ENCODE measurements at regions of chr15 and their contacts with region 1.

Region 1: DNA sequence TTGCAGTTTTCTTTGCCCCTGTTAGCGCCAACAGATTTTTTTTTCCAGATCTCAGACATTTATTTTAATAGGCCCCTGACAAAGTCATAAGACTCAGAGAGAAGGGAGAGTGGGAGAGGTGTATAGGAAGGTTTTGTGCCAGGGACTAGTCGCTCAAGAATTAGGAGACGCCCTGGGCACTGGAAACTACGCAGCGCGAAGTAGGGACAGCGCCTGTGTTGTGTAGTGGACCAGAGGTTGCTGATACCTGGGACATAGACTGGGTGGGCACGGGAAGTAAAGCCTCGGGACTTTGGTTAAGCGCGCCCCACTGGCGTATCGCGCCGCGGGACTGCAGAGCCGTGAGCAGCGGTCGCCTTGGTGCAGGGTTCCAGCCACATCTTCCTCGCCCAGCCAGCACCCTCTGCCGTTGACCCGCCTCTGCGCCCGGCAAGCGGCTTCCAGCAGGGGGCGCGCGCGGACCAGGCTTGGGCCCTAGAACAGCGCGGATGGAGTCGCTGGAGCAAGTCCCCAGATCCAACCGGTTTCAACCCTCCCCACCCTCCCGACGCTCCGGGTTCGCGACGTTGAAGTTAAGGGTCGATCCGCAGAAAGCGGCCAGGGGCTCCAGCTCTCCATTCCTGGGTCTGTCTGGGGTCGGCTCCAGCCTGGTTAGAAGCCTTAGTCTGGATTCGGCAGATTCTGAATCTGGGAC is 3.0 kb upstream of the ISLR2 start:
- DNase-seq: peak; percentile 72 to 94 (median 82)
- ATAC-seq: peak; percentile 90
- H3K4me3 ChIP-seq: no peak overlapping the region
- H3K4me3 Mint-ChIP-seq: no peak overlapping the region
- H3K27ac ChIP-seq: no peak overlapping the region
- H3K27ac Mint-ChIP-seq: no peak overlapping the region
- H3K4me1 ChIP-seq: peaks cover 25% of the 10 kb centered on the region
- H3K4me1 Mint-ChIP-seq: peaks cover 26% of the 10 kb centered on the region
- H3K27me3 ChIP-seq: peaks cover 27 to 39% of the 10 kb centered on the region in 2 experiments
- H3K27me3 Mint-ChIP-seq: peaks cover 61% of the 10 kb centered on the region
- CTCF ChIP-seq: peak; percentile 87

Region 2: GRCh38 chr15:74053941-74054529 is 73.4 kb before region 1 on chr15:
- CTCF ChIA-PET with region 1: no interaction called
- POLR2A ChIA-PET with region 1: no interaction called
- intact Hi-C with region 1: loop called in 1 of 2 experiments (anchors 10 kb)
- DNase-seq: peak; percentile 26 to 80 (median 70)
- ATAC-seq: peak; percentile 100
- H3K4me3 ChIP-seq: no peak overlapping the region
- H3K4me3 Mint-ChIP-seq: no peak overlapping the region
- H3K27ac ChIP-seq: no peak overlapping the region
- H3K27ac Mint-ChIP-seq: no peak overlapping the region
- H3K4me1 ChIP-seq: peaks cover 7% of the 10 kb centered on the region
- H3K4me1 Mint-ChIP-seq: peaks cover 21% of the 10 kb centered on the region
- H3K27me3 ChIP-seq: no peaks in the 10 kb centered on the region
- H3K27me3 Mint-ChIP-seq: no peaks in the 10 kb centered on the region
- CTCF ChIP-seq: no peak

Region 3: GRCh38 chr15:74156678-74157411 is 29.4 kb after region 1 on chr15:
- CTCF ChIA-PET with region 1: no interaction called
- POLR2A ChIA-PET with region 1: no interaction called
- intact Hi-C with region 1: no loop called
- DNase-seq: peak in 1 of 9 experiments; percentile 23
- ATAC-seq: no peak
- H3K4me3 ChIP-seq: no peak overlapping the region
- H3K4me3 Mint-ChIP-seq: no peak overlapping the region
- H3K27ac ChIP-seq: no peak overlapping the region
- H3K27ac Mint-ChIP-seq: no peak overlapping the region
- H3K4me1 ChIP-seq: peaks cover 3% of the 10 kb centered on the region
- H3K4me1 Mint-ChIP-seq: peaks cover 14% of the 10 kb centered on the region
- H3K27me3 ChIP-seq: peaks cover 0 to 3% of the 10 kb centered on the region in 2 experiments
- H3K27me3 Mint-ChIP-seq: peaks cover 11% of the 10 kb centered on the region
- CTCF ChIP-seq: no peak

Region 4: GRCh38 chr15:74307827-74308644 is 180.6 kb after region 1 on chr15:
- CTCF ChIA-PET with region 1: interaction called, 10 read pairs
- POLR2A ChIA-PET with region 1: no interaction called
- intact Hi-C with region 1: no loop called
- DNase-seq: peak in 5 of 9 experiments; percentile 17 to 61 (median 39)
- ATAC-seq: no peak
- H3K4me3 ChIP-seq: no peak overlapping the region
- H3K4me3 Mint-ChIP-seq: no peak overlapping the region
- H3K27ac ChIP-seq: no peak overlapping the region
- H3K27ac Mint-ChIP-seq: no peak overlapping the region
- H3K4me1 ChIP-seq: peaks cover 10% of the 10 kb centered on the region
- H3K4me1 Mint-ChIP-seq: peaks cover 3% of the 10 kb centered on the region
- H3K27me3 ChIP-seq: no peaks in the 10 kb centered on the region
- H3K27me3 Mint-ChIP-seq: peaks cover 29% of the 10 kb centered on the region
- CTCF ChIP-seq: peak; percentile 23

Region 5: GRCh38 chr15:74322181-74323076 is 195.0 kb after region 1 on chr15:
- CTCF ChIA-PET with region 1: interaction called, 107 read pairs
- POLR2A ChIA-PET with region 1: interaction called, 4 read pairs
- intact Hi-C with region 1: loop called in 1 of 2 experiments (anchors 1 kb)
- DNase-seq: peak; percentile 42 to 79 (median 57)
- ATAC-seq: peak; percentile 82
- H3K4me3 ChIP-seq: no peak overlapping the region
- H3K4me3 Mint-ChIP-seq: no peak overlapping the region
- H3K27ac ChIP-seq: no peak overlapping the region
- H3K27ac Mint-ChIP-seq: no peak overlapping the region
- H3K4me1 ChIP-seq: peaks cover 34% of the 10 kb centered on the region
- H3K4me1 Mint-ChIP-seq: peaks cover 22% of the 10 kb centered on the region
- H3K27me3 ChIP-seq: no peaks in the 10 kb centered on the region
- H3K27me3 Mint-ChIP-seq: peaks cover 4% of the 10 kb centered on the region
- CTCF ChIP-seq: peak; percentile 69

Measured in CD8-positive, alpha-beta T cell (primary cell).